ENCODE measurements at regions of chr4 and their contacts with region 1.

Region 1: GRCh38 chr4:154579927-154580326 is 10.6 kb downstream of the FGA start:
- DNase-seq: no peak
- H3K4me3 Mint-ChIP-seq: no peak overlapping the region
- H3K27ac Mint-ChIP-seq: no peak overlapping the region
- H3K4me1 Mint-ChIP-seq: no peaks in the 10 kb centered on the region
- H3K27me3 Mint-ChIP-seq: peaks cover 6% of the 10 kb centered on the region

Region 2: DNA sequence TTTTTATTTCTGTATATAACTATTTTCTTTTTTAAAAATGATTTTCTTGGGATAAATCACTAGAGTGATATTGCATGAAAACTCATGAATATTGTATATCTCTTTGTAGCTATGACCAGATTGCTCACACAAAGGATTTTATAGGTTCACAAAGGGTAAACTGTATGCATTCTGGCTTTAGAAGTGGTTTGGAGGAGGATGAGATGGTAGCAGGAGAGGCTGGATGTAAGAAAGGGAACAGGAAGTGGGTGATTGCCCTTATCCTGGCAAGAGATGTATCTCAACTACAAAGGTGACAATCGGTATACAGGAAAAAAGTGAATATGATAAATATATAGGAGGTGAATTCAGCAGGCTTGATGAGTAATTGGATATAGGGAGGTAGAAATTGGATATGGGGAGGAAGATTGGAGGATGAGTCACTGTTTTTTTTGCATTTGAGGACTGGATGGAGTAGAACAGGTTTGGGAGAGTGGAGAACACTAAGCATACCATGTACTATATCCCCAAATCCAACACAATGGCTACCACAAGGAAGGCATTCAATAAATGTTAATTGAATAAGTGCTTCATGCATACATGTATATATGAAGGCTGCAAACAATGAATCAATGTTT is 22.6 kb after region 1 on chr4:
- CTCF ChIA-PET with region 1: no interaction called
- intact Hi-C with region 1: loop called (anchors 2 kb)
- DNase-seq: no peak
- H3K4me3 Mint-ChIP-seq: no peak overlapping the region
- H3K27ac Mint-ChIP-seq: no peak overlapping the region
- H3K4me1 Mint-ChIP-seq: no peaks in the 10 kb centered on the region
- H3K27me3 Mint-ChIP-seq: peaks cover 17% of the 10 kb centered on the region